ENCODE measurements at regions of chr19 and their contacts with region 1.

Region 1: DNA sequence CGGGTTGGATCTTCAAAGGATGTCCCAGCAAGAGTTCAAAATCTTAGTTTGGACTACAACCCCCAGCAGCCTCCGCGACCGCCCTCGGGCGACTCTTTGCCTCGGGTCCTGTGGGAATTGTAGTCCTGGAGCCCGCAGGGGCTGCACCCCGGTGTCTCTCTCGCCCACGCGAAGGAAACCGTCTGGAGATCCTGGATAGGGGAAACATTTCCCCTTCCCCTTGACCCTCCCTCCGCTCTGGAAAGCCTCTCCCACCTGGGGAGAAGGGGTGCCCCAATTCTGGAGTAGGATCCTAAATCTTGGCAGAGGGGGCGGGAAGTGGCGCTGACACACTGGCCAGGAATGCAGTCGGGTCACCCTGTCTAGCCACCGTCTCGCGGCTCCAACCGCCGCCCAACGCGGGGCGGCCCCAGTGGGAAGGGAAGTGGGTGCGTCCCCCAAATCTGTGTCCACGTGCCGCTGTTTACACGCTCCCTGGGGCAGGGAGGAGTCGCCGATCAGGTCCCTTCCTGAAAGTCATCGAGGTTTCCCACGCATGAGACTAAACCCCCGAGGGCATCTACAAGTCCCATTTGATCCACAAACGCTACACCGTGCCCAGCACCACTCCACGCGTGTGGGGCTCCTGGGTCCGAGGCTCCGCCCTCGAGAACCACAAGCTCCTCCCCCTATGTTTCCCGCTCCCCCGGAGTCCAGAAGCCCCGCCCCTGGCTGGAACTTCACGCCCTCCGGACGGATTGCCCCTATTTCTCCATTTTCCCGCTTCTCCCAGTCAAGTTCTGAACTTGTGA is 761 bp upstream of the PPP1R13L start:
- DNase-seq: peak; percentile 92
- ATAC-seq: peak; percentile 59
- H3K4me3 Mint-ChIP-seq: peak overlapping the region; percentile 93
- H3K27ac Mint-ChIP-seq: peak overlapping the region; percentile 88
- H3K4me1 Mint-ChIP-seq: peaks cover 36% of the 10 kb centered on the region
- H3K27me3 Mint-ChIP-seq: peaks cover 26% of the 10 kb centered on the region
- CTCF ChIP-seq: no peak

Region 2: GRCh38 chr19:45323671-45324081 is 82.0 kb before region 1 on chr19:
- CTCF ChIA-PET with region 1: no interaction called
- POLR2A ChIA-PET with region 1: no interaction called
- intact Hi-C with region 1: no loop called
- DNase-seq: no peak
- ATAC-seq: no peak
- H3K4me3 Mint-ChIP-seq: no peak overlapping the region
- H3K27ac Mint-ChIP-seq: no peak overlapping the region
- H3K4me1 Mint-ChIP-seq: no peaks in the 10 kb centered on the region
- H3K27me3 Mint-ChIP-seq: peaks cover 18% of the 10 kb centered on the region
- CTCF ChIP-seq: no peak

Region 3: GRCh38 chr19:45363861-45364459 is 41.7 kb before region 1 on chr19:
- CTCF ChIA-PET with region 1: no interaction called
- POLR2A ChIA-PET with region 1: no interaction called
- intact Hi-C with region 1: no loop called
- DNase-seq: no peak
- ATAC-seq: no peak
- H3K4me3 Mint-ChIP-seq: no peak overlapping the region
- H3K27ac Mint-ChIP-seq: no peak overlapping the region
- H3K4me1 Mint-ChIP-seq: peaks cover 8% of the 10 kb centered on the region
- H3K27me3 Mint-ChIP-seq: no peaks in the 10 kb centered on the region
- CTCF ChIP-seq: no peak

Region 4: GRCh38 chr19:45391340-45391739 is 14.3 kb before region 1 on chr19:
- CTCF ChIA-PET with region 1: interaction called, 11 read pairs
- POLR2A ChIA-PET with region 1: no interaction called
- intact Hi-C with region 1: no loop called
- DNase-seq: no peak
- ATAC-seq: no peak
- H3K4me3 Mint-ChIP-seq: no peak overlapping the region
- H3K27ac Mint-ChIP-seq: no peak overlapping the region
- H3K4me1 Mint-ChIP-seq: no peaks in the 10 kb centered on the region
- H3K27me3 Mint-ChIP-seq: peaks cover 12% of the 10 kb centered on the region
- CTCF ChIP-seq: no peak

Region 5: GRCh38 chr19:45496349-45496953 is 90.8 kb after region 1 on chr19:
- CTCF ChIA-PET with region 1: interaction called, 12 read pairs
- POLR2A ChIA-PET with region 1: no interaction called
- intact Hi-C with region 1: no loop called
- DNase-seq: peak; percentile 59
- ATAC-seq: peak; percentile 6
- H3K4me3 Mint-ChIP-seq: peak overlapping the region; percentile 28
- H3K27ac Mint-ChIP-seq: no peak overlapping the region
- H3K4me1 Mint-ChIP-seq: peaks cover 35% of the 10 kb centered on the region
- H3K27me3 Mint-ChIP-seq: peaks cover 19% of the 10 kb centered on the region
- CTCF ChIP-seq: no peak

Region 6: GRCh38 chr19:45506991-45507871 is 101.6 kb after region 1 on chr19 and contains the start of gene VASP:
- CTCF ChIA-PET with region 1: no interaction called
- POLR2A ChIA-PET with region 1: no interaction called
- intact Hi-C with region 1: no loop called
- DNase-seq: peak; percentile 97
- ATAC-seq: peak; percentile 60
- H3K4me3 Mint-ChIP-seq: peak within 1 kb of the TSS; percentile 96
- H3K27ac Mint-ChIP-seq: peak within 1 kb of the TSS; percentile 95
- H3K4me1 Mint-ChIP-seq: peaks cover 40% of the 10 kb centered on the region
- H3K27me3 Mint-ChIP-seq: no peaks in the 10 kb centered on the region
- CTCF ChIP-seq: no peak
- total RNA-seq, gene VASP: 152 to 153 TPM

Measured in activated CD8-positive, alpha-beta T cell treated with anti-CD3 and anti-CD28 coated beads for 36 hours (primary cell).